ENCODE measurements at regions of chr5 and their contacts with region 1.

Region 1: GRCh38 chr5:94161801-94162200 is 420.4 kb upstream of the POU5F2 start:
- DNase-seq: no peak
- CTCF ChIP-seq: no peak

Region 2: DNA sequence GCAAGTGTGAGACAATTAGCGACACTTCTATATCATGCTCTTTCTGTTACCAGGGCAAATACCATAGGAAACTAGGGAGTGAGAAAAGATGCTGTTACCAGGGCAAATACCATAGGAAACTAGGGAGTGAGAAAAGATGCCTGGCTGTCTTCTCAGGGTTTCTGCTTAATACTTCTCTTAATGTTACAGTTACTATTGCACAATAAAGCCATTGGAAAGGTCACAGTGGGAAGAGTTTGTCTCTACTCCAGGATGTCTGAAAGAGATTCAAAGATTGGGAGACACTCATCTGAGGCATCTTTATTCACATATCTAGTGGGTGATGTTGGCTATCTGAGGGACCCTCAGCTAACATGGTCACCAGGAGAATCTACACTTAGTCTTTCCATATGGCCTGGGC is 11.3 kb after region 1 on chr5:
- CTCF ChIA-PET with region 1: interaction called, 10 read pairs
- POLR2A ChIA-PET with region 1: no interaction called
- DNase-seq: no peak
- CTCF ChIP-seq: no peak